AG04449 (cell line): ENCODE measurements at regions of chr5 and their contacts with region 1.

Region 1: DNA sequence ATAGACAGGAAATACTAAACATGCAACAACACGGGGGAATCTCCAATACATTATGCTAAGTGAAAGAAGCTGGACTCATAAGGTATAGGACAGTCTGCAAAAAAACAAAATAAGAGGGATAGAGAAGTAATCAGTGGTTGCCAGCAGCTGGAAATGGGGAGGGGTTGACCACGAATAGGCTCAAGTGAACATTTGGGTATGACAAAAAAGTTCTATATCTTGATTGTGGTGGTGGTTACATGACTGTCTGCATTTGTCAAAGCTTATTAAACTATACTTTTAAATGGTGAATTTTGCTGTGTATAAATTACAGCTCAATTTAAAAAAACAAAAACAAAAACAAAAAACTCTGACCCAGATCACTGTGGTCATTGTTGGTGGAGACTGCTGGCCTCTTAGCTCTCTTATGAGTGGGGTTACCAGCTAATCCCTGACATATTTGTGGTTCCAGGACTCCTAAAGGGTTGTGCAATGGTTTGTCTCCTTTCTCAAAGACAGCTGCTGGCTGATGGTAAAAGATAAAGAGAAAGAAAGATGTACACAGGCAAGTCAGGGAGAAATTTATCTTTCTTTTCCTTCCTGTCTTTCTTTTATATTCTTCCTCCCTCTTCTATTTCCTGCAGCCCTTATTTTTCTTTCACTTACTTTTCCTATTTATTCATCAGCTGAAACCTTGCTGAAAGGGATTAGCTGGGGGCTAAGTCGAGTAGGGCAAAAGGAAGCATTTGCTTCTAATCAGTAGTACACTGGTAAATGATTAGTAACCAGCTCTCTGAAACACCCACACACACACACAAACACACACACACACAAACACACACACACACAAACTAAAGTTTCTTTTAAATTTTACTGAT is 42.6 kb upstream of the APC start:
- DNase-seq: no peak
- H3K4me3 ChIP-seq: no peak overlapping the region
- CTCF ChIP-seq: no peak

Region 2: GRCh38 chr5:112684737-112685136 is 10.3 kb before region 1 on chr5:
- CTCF ChIA-PET with region 1: interaction called, 10 read pairs
- POLR2A ChIA-PET with region 1: interaction called, 4 read pairs
- DNase-seq: peak; percentile 84
- H3K4me3 ChIP-seq: no peak overlapping the region
- CTCF ChIP-seq: no peak

Region 3: GRCh38 chr5:113824307-113824706 is 1129.2 kb after region 1 on chr5:
- CTCF ChIA-PET with region 1: no interaction called
- POLR2A ChIA-PET with region 1: no interaction called
- DNase-seq: no peak
- H3K4me3 ChIP-seq: no peak overlapping the region
- CTCF ChIP-seq: no peak